H1 (cell line): ENCODE measurements at regions of chr12 and their contacts with region 1.

Region 1: GRCh38 chr12:56346703-56347102 is 8.0 kb downstream of the IL23A start:
- DNase-seq: peak in 1 of 2 experiments; percentile 63
- H3K4me3 ChIP-seq: no peak overlapping the region
- H3K27ac ChIP-seq: no peak overlapping the region
- H3K4me1 ChIP-seq: no peaks in the 10 kb centered on the region
- H3K27me3 ChIP-seq: no peaks in the 10 kb centered on the region
- CTCF ChIP-seq: peak; percentile 38 to 56 (median 46)
- EP300 ChIP-seq: no peak
- POLR2A ChIP-seq: no peak
- RAD21 ChIP-seq: peak; percentile 52 to 61

Region 2: DNA sequence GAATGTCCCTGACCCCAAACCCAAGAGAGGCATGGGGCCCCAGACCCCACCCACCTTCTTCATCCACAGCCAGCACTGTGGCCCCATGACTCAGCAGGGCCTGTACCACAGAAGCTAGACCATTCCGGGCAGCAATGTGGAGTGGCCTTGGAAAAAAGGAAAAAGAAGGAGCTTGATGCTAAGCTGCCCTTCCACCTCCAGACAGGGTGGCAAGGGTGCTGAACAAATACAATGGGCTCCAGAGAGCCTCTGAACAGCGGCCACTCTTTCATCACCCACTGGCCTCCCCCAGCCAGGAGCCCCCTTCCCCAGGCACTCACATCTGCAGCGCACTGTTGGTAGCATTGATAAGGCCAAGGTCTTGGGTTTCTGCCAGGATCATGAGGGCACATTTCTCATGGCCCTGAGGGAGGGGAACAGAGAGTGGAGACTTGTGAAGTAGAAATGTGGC is 102.9 kb before region 1 on chr12:
- CTCF ChIA-PET with region 1: no interaction called
- POLR2A ChIA-PET with region 1: no interaction called
- DNase-seq: no peak
- H3K4me3 ChIP-seq: no peak overlapping the region
- H3K27ac ChIP-seq: no peak overlapping the region
- H3K4me1 ChIP-seq: no peaks in the 10 kb centered on the region
- H3K27me3 ChIP-seq: no peaks in the 10 kb centered on the region
- CTCF ChIP-seq: no peak
- EP300 ChIP-seq: no peak
- POLR2A ChIP-seq: no peak
- RAD21 ChIP-seq: no peak

Region 3: DNA sequence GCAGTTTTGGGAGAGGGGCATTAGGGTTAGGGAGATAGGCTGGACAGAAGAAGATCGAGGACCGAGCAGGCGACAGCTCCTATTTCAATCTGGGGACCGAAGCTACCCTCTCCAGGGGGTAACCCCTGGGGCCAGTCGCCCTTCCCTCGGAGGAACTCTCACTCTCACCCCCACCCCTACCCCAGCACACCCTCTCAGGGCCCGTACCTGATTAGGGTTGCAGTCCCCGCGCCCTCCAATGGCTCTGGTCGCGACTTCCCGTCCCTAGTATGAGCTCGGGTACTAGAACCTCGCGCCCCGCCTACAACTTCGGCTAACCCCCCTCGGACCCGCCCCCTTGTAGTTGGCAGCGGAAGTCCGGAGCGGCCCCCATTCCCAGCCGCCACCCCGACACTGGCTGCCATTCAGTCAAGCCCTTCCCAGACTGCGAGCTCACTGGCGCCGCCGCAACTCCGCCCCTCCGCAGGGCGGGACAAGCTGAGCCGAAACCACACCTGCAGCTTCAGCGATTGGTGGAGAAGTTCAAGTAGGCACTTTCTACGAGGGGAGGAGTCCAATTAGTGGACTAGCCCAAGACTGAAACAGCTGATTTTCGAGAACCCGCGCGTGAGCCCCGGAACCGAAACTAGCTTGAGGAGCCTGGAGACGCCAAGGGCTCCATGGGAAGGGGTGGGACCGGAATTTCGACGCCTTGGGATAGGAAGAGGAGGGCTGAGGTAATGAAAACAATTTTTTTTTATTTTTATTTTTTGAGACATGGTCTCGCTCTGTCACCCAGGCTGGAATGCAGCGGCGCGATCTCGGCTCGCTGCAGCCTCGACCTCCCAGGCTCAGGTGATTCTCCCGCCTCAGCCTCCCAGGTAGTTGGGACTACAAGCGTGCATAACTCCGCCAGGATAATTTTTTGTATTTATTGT is 13.4 kb after region 1 on chr12 and contains the start of gene STAT2:
- CTCF ChIA-PET with region 1: interaction called, 19 read pairs
- POLR2A ChIA-PET with region 1: interaction called, 9 read pairs
- DNase-seq: peak; percentile 98 to 99
- H3K4me3 ChIP-seq: peak within 1 kb of the TSS; percentile 78 to 88 (median 84)
- H3K27ac ChIP-seq: peak within 1 kb of the TSS; percentile 70
- H3K4me1 ChIP-seq: peaks cover 0 to 5% (median 2%) of the 10 kb centered on the region in 4 experiments; a peak in 4 of 7 replicates
- H3K27me3 ChIP-seq: peaks cover 0 to 3% (median 0%) of the 10 kb centered on the region in 4 experiments; a peak in 1 of 7 replicates
- CTCF ChIP-seq: no peak
- EP300 ChIP-seq: peak; percentile 65 to 71; a peak in 2 of 3 replicates
- POLR2A ChIP-seq: peak in 1 of 2 experiments; percentile 56; a peak in 2 of 3 replicates
- RAD21 ChIP-seq: no peak
- total RNA-seq, gene STAT2: 42.4 and 44.7 TPM in 2 replicates